HepG2 (cell line): ENCODE measurements at regions of chr16 and their contacts with region 1.

Region 1: DNA sequence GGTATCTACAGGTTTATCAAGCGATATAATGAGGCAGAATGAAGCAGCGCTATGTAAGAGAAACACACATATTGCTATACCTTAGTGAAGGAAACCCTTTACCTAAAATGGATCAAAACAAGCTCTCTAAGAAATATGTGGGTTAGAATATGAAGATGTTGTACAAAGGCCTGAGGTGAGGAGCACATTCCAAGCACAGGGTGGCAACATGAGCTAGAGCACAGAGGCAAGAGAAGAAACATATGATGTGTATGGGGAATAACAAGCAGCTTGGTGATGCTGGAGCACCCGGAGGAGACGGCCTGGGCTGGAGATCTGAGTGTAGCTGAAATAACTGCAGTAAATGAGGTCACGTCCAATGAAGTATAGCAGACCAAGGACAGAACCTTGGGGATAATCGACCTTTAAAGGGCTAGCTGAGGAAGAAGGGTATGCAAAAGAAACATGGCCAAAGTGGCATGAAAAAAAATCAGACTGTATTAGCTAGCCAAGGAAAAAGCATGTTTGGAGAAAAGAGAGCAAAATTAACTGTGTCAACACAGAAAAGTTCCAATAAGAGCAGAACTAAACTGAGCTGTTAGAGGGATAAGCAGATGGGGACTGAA is 44.0 kb downstream of the MARVELD3 start:
- DNase-seq: no peak
- ATAC-seq: peak; percentile 18
- H3K4me3 ChIP-seq: no peak overlapping the region
- H3K27ac ChIP-seq: peak overlapping the region; percentile 57
- H3K4me1 ChIP-seq: peaks cover 60% of the 10 kb centered on the region
- H3K27me3 ChIP-seq: no peaks in the 10 kb centered on the region
- CTCF ChIP-seq: peak; percentile 36
- EP300 ChIP-seq: no peak
- POLR2A ChIP-seq: no peak
- RAD21 ChIP-seq: no peak

Region 2: GRCh38 chr16:71645453-71645852 is 24.6 kb before region 1 on chr16:
- CTCF ChIA-PET with region 1: no interaction called
- POLR2A ChIA-PET with region 1: no interaction called
- in situ Hi-C with region 1: no loop called
- intact Hi-C with region 1: loop called (anchors 2 kb)
- DNase-seq: peak; percentile 67
- ATAC-seq: peak; percentile 90
- H3K4me3 ChIP-seq: no peak overlapping the region
- H3K27ac ChIP-seq: no peak overlapping the region
- H3K4me1 ChIP-seq: no peaks in the 10 kb centered on the region
- H3K27me3 ChIP-seq: no peaks in the 10 kb centered on the region
- CTCF ChIP-seq: peak; percentile 83
- EP300 ChIP-seq: no peak
- POLR2A ChIP-seq: no peak
- RAD21 ChIP-seq: peak; percentile 78

Region 3: GRCh38 chr16:71723537-71724319 is 53.7 kb after region 1 on chr16:
- CTCF ChIA-PET with region 1: no interaction called
- POLR2A ChIA-PET with region 1: no interaction called
- in situ Hi-C with region 1: no loop called
- intact Hi-C with region 1: loop called (anchors 5 kb)
- DNase-seq: peak; percentile 49
- ATAC-seq: peak; percentile 87
- H3K4me3 ChIP-seq: peak overlapping the region; percentile 77 to 88 (median 87)
- H3K27ac ChIP-seq: peak overlapping the region; percentile 69
- H3K4me1 ChIP-seq: peaks cover 38% of the 10 kb centered on the region
- H3K27me3 ChIP-seq: no peaks in the 10 kb centered on the region; a peak in 1 of 5 replicates
- CTCF ChIP-seq: peak; percentile 10; the same call in 1 of the 2 replicates
- EP300 ChIP-seq: no peak
- POLR2A ChIP-seq: peak; percentile 53 to 55
- RAD21 ChIP-seq: peak; percentile 50